AG04449 (cell line): ENCODE measurements at regions of chr20 and their contacts with region 1.

Region 1: GRCh38 chr20:23655491-23656211 is 17.9 kb upstream of the CST3 start:
- DNase-seq: no peak
- H3K4me3 ChIP-seq: no peak overlapping the region
- CTCF ChIP-seq: no peak

Region 2: DNA sequence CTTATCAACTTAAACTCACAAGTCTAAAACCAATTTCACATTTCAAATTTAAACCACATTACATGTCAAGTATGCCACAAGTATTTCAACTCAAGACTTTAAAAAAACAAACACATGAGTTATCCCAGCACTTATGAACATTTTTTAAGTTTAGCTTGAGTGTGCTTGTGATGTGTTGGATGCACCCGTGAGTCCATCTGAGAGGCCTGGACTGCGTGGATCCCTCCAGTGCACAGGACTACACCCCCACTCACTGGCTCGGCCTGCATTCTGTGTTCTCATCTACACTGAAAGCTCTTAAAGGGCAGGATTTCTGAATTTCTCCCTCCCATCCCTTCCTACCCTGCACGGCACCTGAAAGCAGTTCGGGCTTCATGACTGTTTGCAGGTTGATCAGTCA is 440.7 kb before region 1 on chr20:
- CTCF ChIA-PET with region 1: no interaction called
- POLR2A ChIA-PET with region 1: no interaction called
- DNase-seq: peak; percentile 17
- H3K4me3 ChIP-seq: no peak overlapping the region
- CTCF ChIP-seq: no peak

Region 3: DNA sequence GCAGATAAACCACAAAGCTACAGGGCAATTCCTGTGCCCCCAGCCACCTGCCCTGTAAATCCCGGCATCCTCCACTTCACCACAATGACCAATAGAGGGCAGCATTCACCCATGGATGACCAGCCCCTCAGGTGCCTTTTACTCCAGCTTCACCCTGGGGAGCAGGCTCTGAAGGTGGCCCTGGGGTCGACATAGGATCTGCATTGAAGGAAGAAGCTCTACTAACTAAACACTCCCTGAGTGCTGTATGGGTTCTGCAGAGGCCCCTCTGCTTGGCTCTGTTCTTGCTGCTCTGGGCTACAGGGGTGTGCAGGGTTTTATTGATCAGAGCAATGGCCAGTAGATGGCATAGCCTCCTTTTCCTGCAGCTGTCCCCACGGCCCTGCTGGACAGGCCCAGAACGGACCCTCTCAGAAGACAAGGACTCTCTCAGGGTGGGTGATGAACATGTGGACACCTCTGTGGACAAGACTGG is 12.9 kb after region 1 on chr20:
- CTCF ChIA-PET with region 1: interaction called, 24 read pairs
- POLR2A ChIA-PET with region 1: no interaction called
- DNase-seq: no peak
- H3K4me3 ChIP-seq: no peak overlapping the region
- CTCF ChIP-seq: peak; percentile 77

Region 4: DNA sequence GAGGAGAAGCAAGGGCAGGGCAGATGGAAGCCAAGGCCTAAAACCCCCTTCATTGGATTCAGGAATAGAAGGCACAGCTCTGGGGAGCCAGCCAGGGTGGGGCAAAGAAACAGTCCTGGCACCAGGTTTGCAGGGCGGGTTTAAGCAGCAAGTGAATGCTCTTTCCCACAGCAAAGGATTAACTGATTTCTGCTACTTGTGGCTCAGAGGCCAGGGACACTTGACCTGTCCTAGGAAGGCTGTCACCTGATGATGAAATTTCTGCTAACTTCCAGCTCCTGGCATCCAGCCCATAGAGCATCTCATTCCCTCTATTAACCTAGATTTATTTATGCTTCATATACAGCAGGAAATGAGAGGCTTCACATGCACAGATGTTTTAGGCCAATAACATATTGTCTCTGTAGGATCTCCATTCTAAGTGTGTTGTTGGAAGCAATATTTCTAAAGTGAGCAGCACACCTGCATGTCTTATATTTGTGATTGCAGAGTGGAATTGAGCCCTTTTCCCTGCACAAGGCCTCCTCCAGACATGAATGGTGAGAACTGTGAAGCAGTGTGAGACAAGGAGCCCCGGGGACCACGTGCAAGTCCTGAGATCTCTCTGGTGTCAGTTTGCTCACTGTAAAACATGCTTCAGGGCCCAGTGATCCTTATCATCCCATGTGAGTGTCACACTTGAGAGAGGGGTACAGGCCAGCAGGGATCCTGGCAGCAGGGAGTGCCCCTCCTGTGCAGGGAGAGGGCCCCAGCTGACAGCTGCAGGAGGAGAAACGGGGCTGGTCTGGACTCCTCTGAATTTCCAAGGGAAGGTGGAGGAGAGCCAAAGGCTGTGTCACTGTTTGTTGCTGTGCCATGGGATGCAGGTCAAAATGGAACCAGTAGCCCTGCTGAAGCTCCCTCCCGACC is 265.0 kb after region 1 on chr20:
- CTCF ChIA-PET with region 1: no interaction called
- POLR2A ChIA-PET with region 1: no interaction called
- DNase-seq: no peak
- H3K4me3 ChIP-seq: no peak overlapping the region
- CTCF ChIP-seq: no peak